MCF 10A (cell line): ENCODE measurements at regions of chr1 and their contacts with region 1.

Region 1: GRCh38 chr1:95043141-95043980 is 29.4 kb downstream of the ALG14 start:
- DNase-seq: peak; percentile 82
- H3K4me3 Mint-ChIP-seq: no peak overlapping the region
- H3K27ac Mint-ChIP-seq: no peak overlapping the region
- H3K4me1 Mint-ChIP-seq: peaks cover 10% of the 10 kb centered on the region
- H3K27me3 Mint-ChIP-seq: no peaks in the 10 kb centered on the region
- CTCF ChIP-seq: peak; percentile 98

Region 2: DNA sequence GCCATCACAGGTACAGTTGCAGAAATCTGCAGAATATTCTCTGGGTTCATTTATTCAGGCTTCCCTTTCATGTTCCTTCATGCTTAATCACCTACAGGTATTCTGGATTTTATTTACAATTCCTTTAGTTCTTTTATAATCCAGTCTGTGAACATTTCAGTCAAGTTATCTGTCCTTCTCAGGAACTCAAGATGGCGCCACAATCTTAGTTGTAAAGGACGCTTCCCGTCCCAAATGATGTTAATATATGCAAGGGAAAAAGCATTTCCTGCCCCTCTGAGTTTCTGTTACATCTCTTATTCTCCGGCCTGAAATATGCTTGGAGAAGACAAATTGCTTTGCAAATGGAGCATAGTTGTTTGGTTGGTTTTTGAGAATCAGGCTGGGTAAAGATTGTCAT is 521.1 kb before region 1 on chr1:
- CTCF ChIA-PET with region 1: interaction called, 3 read pairs
- POLR2A ChIA-PET with region 1: interaction called, 4 read pairs
- intact Hi-C with region 1: loop called (anchors 1 kb)
- DNase-seq: peak; percentile 65
- H3K4me3 Mint-ChIP-seq: no peak overlapping the region
- H3K27ac Mint-ChIP-seq: no peak overlapping the region
- H3K4me1 Mint-ChIP-seq: peaks cover 6% of the 10 kb centered on the region
- H3K27me3 Mint-ChIP-seq: no peaks in the 10 kb centered on the region
- CTCF ChIP-seq: peak; percentile 32

Region 3: DNA sequence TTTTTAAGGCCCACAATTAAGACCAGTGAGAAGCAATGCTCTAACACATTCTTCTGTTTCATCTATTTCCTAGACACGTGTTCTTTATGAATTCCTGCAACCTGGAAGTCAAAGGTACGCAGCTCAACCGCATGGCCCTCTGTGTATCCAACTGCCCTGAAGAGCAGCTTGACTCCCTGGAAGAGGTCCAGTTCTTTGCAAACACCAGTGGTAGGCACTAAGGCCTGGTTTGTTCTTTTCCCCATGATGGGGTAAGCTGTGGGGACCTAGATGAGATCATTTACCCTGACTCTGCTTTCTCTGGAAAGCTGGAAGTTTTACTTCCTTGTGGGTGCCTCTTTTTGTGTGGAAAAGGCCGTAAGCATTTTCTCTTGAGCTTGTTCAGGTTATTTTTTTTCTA is 215.9 kb before region 1 on chr1:
- CTCF ChIA-PET with region 1: interaction called, 10 read pairs
- POLR2A ChIA-PET with region 1: no interaction called
- intact Hi-C with region 1: no loop called
- DNase-seq: no peak
- H3K4me3 Mint-ChIP-seq: no peak overlapping the region
- H3K27ac Mint-ChIP-seq: no peak overlapping the region
- H3K4me1 Mint-ChIP-seq: no peaks in the 10 kb centered on the region
- H3K27me3 Mint-ChIP-seq: no peaks in the 10 kb centered on the region
- CTCF ChIP-seq: no peak

Region 4: GRCh38 chr1:94863919-94864318 is 179.4 kb before region 1 on chr1:
- CTCF ChIA-PET with region 1: interaction called, 17 read pairs
- POLR2A ChIA-PET with region 1: interaction called, 18 read pairs
- intact Hi-C with region 1: no loop called
- DNase-seq: peak; percentile 91
- H3K4me3 Mint-ChIP-seq: peak overlapping the region; percentile 55
- H3K27ac Mint-ChIP-seq: peak overlapping the region; percentile 97
- H3K4me1 Mint-ChIP-seq: peaks cover 25% of the 10 kb centered on the region
- H3K27me3 Mint-ChIP-seq: no peaks in the 10 kb centered on the region
- CTCF ChIP-seq: no peak

Region 5: DNA sequence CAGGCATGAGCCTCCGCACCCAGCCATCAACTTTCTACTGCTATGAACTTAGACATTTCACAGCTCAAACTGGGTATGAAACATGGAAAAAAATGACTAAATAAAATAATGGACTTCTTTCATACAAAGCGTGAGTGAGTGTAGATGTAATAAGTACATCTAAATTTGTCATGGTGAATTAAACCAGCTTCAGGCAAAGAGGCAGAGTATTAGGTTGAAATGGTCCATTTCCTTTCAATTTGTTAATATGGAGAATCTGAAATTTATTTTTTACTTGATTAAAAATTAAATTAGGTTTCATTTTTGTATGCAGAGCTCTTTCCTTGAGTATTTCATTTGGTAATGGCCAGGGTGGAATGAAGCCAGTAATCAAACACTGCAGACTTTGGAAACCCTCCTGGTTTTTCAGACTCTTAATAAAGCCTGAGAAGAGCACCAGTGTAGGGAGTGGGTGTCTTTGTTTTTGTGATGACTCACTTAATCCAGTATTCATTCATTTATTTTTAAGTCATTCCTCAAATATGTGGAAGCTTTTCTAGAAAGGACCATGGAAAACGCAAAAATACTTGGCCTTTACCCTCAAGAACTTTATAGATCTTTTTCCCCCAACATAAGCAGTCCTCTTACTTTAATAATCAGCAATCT is 19.8 kb before region 1 on chr1:
- CTCF ChIA-PET with region 1: interaction called, 14 read pairs
- POLR2A ChIA-PET with region 1: interaction called, 4 read pairs
- intact Hi-C with region 1: no loop called
- DNase-seq: peak; percentile 61
- H3K4me3 Mint-ChIP-seq: no peak overlapping the region
- H3K27ac Mint-ChIP-seq: peak overlapping the region; percentile 39
- H3K4me1 Mint-ChIP-seq: peaks cover 18% of the 10 kb centered on the region
- H3K27me3 Mint-ChIP-seq: no peaks in the 10 kb centered on the region
- CTCF ChIP-seq: no peak